ENCODE measurements at regions of chr6 and their contacts with region 1.

Region 1: DNA sequence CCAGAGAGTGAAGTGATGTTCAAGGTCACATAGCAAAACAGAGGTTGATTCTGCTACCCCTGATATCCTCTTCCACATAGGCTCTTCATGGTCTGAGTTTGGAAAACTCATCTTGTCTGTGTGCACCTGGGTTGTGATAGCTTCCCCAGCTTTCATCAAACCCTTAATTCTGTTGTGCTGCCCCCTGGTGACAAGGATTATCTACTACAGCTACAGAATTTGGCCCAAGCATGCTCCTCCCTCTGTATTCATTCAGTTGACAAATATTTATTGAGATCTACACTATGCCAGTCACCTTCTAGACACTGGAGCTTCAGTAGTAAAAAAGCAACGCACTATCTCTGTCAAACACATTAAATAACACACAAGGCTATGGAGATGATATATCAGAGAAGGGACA is 50.4 kb downstream of the SMPDL3A start:
- DNase-seq: no peak
- ATAC-seq: peak; percentile 81 to 95 (median 86)
- H3K4me3 ChIP-seq: no peak overlapping the region
- H3K27ac ChIP-seq: no peak overlapping the region
- H3K4me1 ChIP-seq: no peaks in the 10 kb centered on the region
- H3K27me3 ChIP-seq: no peaks in the 10 kb centered on the region
- CTCF ChIP-seq: peak; percentile 73

Region 2: GRCh38 chr6:122673343-122673961 is 166.0 kb before region 1 on chr6:
- intact Hi-C with region 1: no loop called
- DNase-seq: no peak
- ATAC-seq: no peak
- H3K4me3 ChIP-seq: no peak overlapping the region
- H3K27ac ChIP-seq: no peak overlapping the region
- H3K4me1 ChIP-seq: no peaks in the 10 kb centered on the region
- H3K27me3 ChIP-seq: no peaks in the 10 kb centered on the region
- CTCF ChIP-seq: no peak

Region 3: DNA sequence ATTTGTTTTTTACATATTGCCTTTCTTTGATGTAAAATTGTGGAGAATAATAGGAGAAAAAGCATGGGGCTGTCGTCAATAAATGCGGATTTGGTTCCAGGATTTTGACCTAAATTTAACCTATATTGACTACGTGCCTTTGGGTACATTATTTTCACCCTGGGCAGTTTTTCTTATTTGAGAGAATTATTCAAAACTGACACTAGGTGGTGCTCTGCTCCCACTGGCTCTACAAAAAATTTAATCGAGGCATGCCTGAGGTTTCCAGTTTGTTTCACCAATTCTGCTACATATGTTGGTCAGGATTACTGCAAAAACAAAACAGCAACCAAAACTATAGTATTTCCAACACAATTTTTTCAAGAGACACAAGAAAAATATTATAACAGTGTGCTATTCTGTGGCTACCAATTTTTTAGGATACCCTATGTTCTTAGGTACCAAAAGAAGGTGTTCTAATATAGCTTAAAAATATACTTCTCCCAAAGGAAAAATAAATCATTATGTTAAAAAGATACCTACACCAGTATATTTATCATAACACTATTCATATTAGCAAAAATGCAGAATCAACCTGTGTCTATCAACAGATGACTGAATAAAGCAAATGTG is 108.6 kb before region 1 on chr6:
- intact Hi-C with region 1: loop called (anchors 2 kb)
- DNase-seq: no peak
- ATAC-seq: peak; percentile 57 to 83 (median 66)
- H3K4me3 ChIP-seq: no peak overlapping the region
- H3K27ac ChIP-seq: no peak overlapping the region
- H3K4me1 ChIP-seq: peaks cover 5% of the 10 kb centered on the region
- H3K27me3 ChIP-seq: no peaks in the 10 kb centered on the region
- CTCF ChIP-seq: peak; percentile 87

Region 4: GRCh38 chr6:122751326-122751725 is 88.2 kb before region 1 on chr6:
- intact Hi-C with region 1: loop called in 1 of 2 experiments (anchors 5 kb)
- DNase-seq: no peak
- ATAC-seq: no peak
- H3K4me3 ChIP-seq: no peak overlapping the region
- H3K27ac ChIP-seq: no peak overlapping the region
- H3K4me1 ChIP-seq: peaks cover 28% of the 10 kb centered on the region
- H3K27me3 ChIP-seq: no peaks in the 10 kb centered on the region
- CTCF ChIP-seq: no peak

Region 5: DNA sequence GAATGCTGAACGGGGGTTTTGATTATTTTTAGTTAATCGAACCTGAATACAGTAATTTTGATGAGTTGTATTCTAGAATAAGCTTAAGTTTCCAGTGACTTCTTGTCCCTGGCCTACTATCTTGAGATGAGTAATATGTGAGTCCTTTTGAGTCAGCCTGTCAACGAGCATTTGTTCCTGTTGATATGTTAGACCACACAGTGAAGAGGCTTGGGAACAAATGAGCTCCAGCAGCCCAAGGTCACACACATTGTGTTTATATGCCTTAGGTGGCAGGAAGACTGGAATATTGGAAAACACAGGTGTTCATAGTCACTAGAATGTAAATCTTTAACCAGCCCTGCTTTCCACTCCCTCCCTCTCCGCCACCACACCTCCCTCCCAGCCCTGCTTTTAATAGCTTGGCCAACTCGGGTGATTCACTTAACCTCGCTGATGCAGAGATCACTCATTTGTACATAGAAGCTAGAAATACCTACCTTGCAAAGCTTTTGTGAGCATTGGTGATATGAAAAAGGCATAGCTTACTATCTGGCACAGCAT is 41.3 kb before region 1 on chr6:
- intact Hi-C with region 1: loop called in 1 of 2 experiments (anchors 2 kb)
- DNase-seq: peak; percentile 23 to 62
- ATAC-seq: peak; percentile 86 to 93 (median 93)
- H3K4me3 ChIP-seq: no peak overlapping the region
- H3K27ac ChIP-seq: peak overlapping the region; percentile 63
- H3K4me1 ChIP-seq: peaks cover 21% of the 10 kb centered on the region
- H3K27me3 ChIP-seq: no peaks in the 10 kb centered on the region
- CTCF ChIP-seq: no peak

Region 6: GRCh38 chr6:122995921-122996793 is 156.7 kb after region 1 on chr6 and contains the start of gene CLVS2:
- intact Hi-C with region 1: no loop called
- DNase-seq: peak; percentile 12 to 44
- ATAC-seq: peak; percentile 52 to 78 (median 70)
- H3K4me3 ChIP-seq: peak within 1 kb of the TSS; percentile 73
- H3K27ac ChIP-seq: no peak within 1 kb of the TSS
- H3K4me1 ChIP-seq: no peaks in the 10 kb centered on the region
- H3K27me3 ChIP-seq: peaks cover 0 to 63% (median 14%) of the 10 kb centered on the region in 3 donors
- CTCF ChIP-seq: no peak
- total RNA-seq, gene CLVS2: 0.08 to 2.5 (median 0.16) TPM

Region 7: GRCh38 chr6:123150076-123150475 is 310.6 kb after region 1 on chr6:
- intact Hi-C with region 1: no loop called
- DNase-seq: no peak
- ATAC-seq: peak in 1 of 4 donors; percentile 52
- H3K4me3 ChIP-seq: no peak overlapping the region
- H3K27ac ChIP-seq: no peak overlapping the region
- H3K4me1 ChIP-seq: peaks cover 11% of the 10 kb centered on the region
- H3K27me3 ChIP-seq: no peaks in the 10 kb centered on the region
- CTCF ChIP-seq: no peak

Measured in psoas muscle (tissue), 8 donors.